SK-N-SH (cell line): ENCODE measurements at regions of chr1 and their contacts with region 1.

Region 1: GRCh38 chr1:42747125-42747524 is 7.1 kb upstream of the CLDN19 start:
- DNase-seq: peak; percentile 84
- H3K4me3 ChIP-seq: no peak overlapping the region
- H3K27ac ChIP-seq: no peak overlapping the region
- H3K4me1 ChIP-seq: peaks cover 0 to 20% of the 10 kb centered on the region in 2 experiments; a peak in 1 of 4 replicates
- H3K27me3 ChIP-seq: no peaks in the 10 kb centered on the region
- CTCF ChIP-seq: peak; percentile 60
- EP300 ChIP-seq: no peak
- RAD21 ChIP-seq: peak; percentile 73

Region 2: GRCh38 chr1:42146626-42147320 is 600.4 kb before region 1 on chr1:
- CTCF ChIA-PET with region 1: interaction called, 12 read pairs
- POLR2A ChIA-PET with region 1: no interaction called
- DNase-seq: peak; percentile 85
- H3K4me3 ChIP-seq: no peak overlapping the region; a peak in 1 of 4 replicates
- H3K27ac ChIP-seq: no peak overlapping the region
- H3K4me1 ChIP-seq: no peaks in the 10 kb centered on the region
- H3K27me3 ChIP-seq: peaks cover 16% of the 10 kb centered on the region
- CTCF ChIP-seq: peak; percentile 85
- EP300 ChIP-seq: no peak
- RAD21 ChIP-seq: peak; percentile 94

Region 3: DNA sequence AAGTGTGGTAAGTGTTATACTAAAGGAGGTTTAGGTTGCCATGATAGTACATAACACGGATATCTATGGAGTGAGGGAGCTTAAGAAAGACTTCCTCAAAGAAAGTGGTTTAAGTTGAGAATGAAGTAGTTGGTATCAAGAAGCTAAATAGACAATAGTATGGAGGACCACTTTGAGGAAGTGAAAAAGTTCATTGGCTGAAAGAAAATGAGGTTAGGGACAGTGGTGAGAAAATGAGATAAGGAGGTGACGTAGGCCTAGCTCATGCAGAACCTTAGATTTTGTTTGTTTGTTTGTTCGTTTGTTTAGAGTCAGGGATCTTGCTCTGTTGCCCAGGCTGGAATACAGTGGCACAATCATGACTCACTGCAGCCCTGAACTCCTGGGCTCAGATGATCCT is 161.1 kb before region 1 on chr1:
- CTCF ChIA-PET with region 1: interaction called, 16 read pairs
- POLR2A ChIA-PET with region 1: no interaction called
- DNase-seq: no peak
- H3K4me3 ChIP-seq: no peak overlapping the region
- H3K27ac ChIP-seq: no peak overlapping the region
- H3K4me1 ChIP-seq: no peaks in the 10 kb centered on the region
- H3K27me3 ChIP-seq: no peaks in the 10 kb centered on the region
- CTCF ChIP-seq: no peak
- EP300 ChIP-seq: no peak
- RAD21 ChIP-seq: no peak

Region 4: GRCh38 chr1:42736150-42736850 is 10.8 kb before region 1 on chr1:
- CTCF ChIA-PET with region 1: interaction called, 25 read pairs
- POLR2A ChIA-PET with region 1: no interaction called
- DNase-seq: peak; percentile 62
- H3K4me3 ChIP-seq: no peak overlapping the region
- H3K27ac ChIP-seq: no peak overlapping the region
- H3K4me1 ChIP-seq: peaks cover 0 to 6% of the 10 kb centered on the region in 2 experiments; a peak in 1 of 4 replicates
- H3K27me3 ChIP-seq: no peaks in the 10 kb centered on the region
- CTCF ChIP-seq: no peak; the same call in 1 of the 2 replicates
- EP300 ChIP-seq: no peak
- RAD21 ChIP-seq: no peak

Region 5: DNA sequence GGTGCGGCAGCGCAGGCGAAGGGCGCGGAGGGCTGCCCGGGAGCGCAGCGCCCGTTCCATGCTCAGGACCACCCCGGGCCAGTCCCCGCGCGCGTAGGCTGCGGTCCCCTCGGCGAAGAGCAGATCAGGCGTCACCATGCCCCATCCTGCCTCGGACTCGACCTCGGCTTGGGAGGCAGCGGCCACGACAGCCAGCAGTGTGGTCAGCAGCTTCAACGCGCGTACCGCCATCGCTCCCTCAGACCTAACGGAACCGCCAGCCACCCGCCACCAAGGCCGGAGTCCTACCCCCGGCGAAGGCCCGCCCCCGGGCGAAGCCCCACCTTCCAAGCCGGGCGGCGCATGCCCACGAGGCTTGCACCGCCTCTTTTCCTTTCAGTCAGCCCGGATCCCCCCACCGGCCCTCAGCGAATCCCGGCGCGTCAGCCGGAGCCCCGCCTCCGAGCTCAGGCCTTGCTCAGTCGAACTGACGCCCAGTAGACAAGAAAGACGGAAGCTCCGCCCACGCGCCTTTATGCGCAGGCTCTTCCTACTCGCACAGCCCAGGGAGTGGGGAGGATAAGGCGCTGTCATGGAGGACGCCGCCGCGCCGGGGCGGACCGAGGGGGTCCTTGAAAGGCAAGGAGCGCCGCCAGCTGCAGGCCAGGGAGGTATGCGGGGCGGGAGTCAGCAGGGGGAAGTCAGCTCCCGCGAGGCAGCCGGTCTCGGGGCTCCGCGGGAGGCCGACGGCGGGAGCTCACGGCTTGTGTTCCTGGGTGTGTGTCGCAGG is 19.8 kb after region 1 on chr1 and contains the starts of genes C1orf50 and P3H1:
- CTCF ChIA-PET with region 1: interaction called, 13 read pairs
- POLR2A ChIA-PET with region 1: no interaction called
- DNase-seq: peak; percentile 97
- H3K4me3 ChIP-seq: peak within 1 kb of the TSS; percentile 77 to 91
- H3K27ac ChIP-seq: peak within 1 kb of the TSS; percentile 75 to 84
- H3K4me1 ChIP-seq: peaks cover 4 to 12% of the 10 kb centered on the region in 2 experiments; a peak in 2 of 4 replicates
- H3K27me3 ChIP-seq: no peaks in the 10 kb centered on the region
- CTCF ChIP-seq: no peak
- EP300 ChIP-seq: no peak
- RAD21 ChIP-seq: no peak
- polyA plus RNA-seq, gene C1orf50: 2.6 and 3.6 TPM in 2 replicates
- polyA plus RNA-seq, gene P3H1: 64.3 and 66.8 TPM in 2 replicates

Region 6: GRCh38 chr1:42962641-42963377 is 215.7 kb after region 1 on chr1:
- CTCF ChIA-PET with region 1: no interaction called
- POLR2A ChIA-PET with region 1: no interaction called
- DNase-seq: no peak
- H3K4me3 ChIP-seq: no peak overlapping the region
- H3K27ac ChIP-seq: peak overlapping the region in 1 of 2 experiments; percentile 12; a peak in 1 of 4 replicates
- H3K4me1 ChIP-seq: peaks cover 16 to 21% of the 10 kb centered on the region in 2 experiments
- H3K27me3 ChIP-seq: no peaks in the 10 kb centered on the region
- CTCF ChIP-seq: no peak
- EP300 ChIP-seq: no peak
- RAD21 ChIP-seq: no peak